BJ (cell line): ENCODE measurements at regions of chr3 and their contacts with region 1.

Region 1: DNA sequence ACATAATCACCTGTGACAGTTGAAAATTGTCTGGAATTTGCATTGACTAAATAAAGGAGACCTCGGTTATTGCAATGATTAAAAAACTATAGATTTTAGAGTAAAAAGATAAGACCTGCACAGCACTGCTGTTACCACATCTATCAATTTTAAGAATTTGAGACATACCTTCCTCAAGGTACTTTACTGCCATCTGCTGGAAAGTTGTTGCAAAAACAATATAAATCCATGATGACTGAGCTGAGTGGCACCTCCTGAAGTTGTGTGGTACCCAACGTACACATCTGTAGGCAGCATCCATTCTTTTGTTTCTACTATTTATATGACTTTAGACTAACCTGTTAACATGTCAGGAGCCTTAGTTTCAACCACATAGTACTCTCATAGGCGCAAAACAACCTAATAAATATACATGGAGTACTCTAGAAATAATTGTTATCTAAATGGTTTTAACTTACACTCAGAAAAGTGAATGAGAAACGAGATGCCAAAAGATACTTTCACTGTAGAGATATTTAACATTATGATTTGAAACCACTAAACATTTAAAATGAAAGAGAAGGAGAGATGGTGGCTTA is 106.7 kb downstream of the GHSR start:
- DNase-seq: no peak
- H3K4me3 ChIP-seq: no peak overlapping the region
- H3K27me3 ChIP-seq: no peaks in the 10 kb centered on the region
- CTCF ChIP-seq: peak; percentile 54

Region 2: DNA sequence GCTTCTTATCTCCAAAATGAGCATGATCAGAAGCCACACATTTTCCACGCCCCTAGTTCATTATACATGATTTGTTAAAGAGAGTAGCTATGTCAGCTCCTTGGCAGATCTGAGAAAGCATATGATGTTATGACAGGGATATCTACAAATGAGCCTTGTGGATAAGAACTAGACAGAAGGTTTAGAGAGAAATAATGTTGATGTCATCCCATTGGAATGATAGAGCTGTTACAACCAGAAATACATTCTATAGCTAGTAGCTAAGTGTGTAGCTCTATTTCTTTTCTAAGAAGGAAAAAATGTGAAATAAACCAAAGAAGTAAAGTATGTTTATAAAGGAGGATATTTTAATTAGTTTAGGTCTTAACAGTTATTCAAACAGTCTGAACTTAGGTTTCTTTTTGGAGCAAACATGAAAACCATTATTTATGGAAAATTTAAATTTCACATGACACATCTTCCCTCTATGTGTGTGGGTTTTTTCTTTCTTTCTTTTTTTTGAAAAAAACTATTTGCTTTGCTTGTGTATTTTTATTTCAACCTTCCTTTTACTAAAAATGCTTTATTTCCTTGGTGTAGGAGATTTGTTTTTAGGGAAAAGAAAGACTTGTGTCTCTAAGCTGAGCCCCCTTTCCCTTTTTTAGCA is 61.0 kb before region 1 on chr3:
- CTCF ChIA-PET with region 1: no interaction called
- POLR2A ChIA-PET with region 1: no interaction called
- DNase-seq: peak; percentile 32
- H3K4me3 ChIP-seq: no peak overlapping the region
- H3K27me3 ChIP-seq: no peaks in the 10 kb centered on the region
- CTCF ChIP-seq: no peak

Region 3: DNA sequence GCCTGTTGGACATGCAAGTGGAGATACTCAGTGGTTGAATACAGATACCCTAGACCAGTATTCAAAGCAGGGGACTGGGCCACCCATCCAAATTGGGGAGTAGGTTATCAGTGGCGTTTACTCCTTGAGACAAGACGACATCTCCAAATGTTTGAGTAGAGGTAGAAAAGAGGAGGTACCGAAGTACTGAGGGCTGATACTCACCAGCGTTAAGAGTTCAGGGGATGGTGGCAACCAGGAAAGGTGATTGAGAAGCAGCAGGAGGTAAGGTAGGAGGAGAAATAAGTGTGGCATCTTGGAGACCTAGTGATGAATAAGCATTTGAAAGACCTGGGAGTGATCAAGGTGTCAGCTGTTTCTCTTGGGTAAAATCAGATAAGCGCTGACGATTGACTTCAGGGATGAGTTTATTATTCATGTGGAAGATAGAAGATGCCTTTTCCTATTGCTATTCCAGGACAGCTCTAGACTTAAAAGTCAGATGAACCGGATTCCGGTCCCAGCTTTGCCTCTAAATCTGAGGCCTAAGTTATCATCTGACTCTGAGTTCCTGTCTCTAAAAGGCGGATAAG is 10.4 kb after region 1 on chr3:
- CTCF ChIA-PET with region 1: interaction called, 20 read pairs
- POLR2A ChIA-PET with region 1: no interaction called
- DNase-seq: no peak
- H3K4me3 ChIP-seq: no peak overlapping the region
- H3K27me3 ChIP-seq: no peaks in the 10 kb centered on the region
- CTCF ChIP-seq: no peak